ENCODE measurements at regions of chr3 and their contacts with region 1.

Region 1: GRCh38 chr3:49387721-49388120 is 24.1 kb downstream of the RHOA start:
- DNase-seq: peak; percentile 83
- ATAC-seq: peak; percentile 95
- H3K4me3 ChIP-seq: no peak overlapping the region
- H3K27ac ChIP-seq: peak overlapping the region; percentile 39
- H3K4me1 ChIP-seq: peaks cover 10% of the 10 kb centered on the region; the same call in 1 of the 2 replicates
- H3K27me3 ChIP-seq: no peaks in the 10 kb centered on the region
- CTCF ChIP-seq: no peak

Region 2: DNA sequence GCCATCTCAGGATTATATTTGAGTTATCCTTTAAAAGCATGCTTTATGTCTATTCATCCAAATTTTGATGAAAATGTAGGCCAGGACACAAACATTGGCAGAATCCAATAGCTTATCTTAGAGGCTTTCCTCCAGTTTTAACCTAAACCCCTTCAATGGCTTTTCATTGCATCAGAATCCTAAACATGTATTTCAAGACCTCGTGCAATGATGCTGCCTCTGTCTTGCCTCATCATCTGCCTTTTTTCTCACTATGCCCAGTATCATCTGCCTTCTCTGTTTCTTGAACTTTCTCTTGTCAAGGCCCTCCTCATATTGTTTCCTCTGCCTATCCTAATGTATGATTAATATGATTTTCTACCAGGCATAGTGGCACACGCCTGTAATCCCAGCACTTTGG is 1295.5 kb before region 1 on chr3:
- CTCF ChIA-PET with region 1: no interaction called
- POLR2A ChIA-PET with region 1: no interaction called
- intact Hi-C with region 1: no loop called
- DNase-seq: no peak
- ATAC-seq: no peak
- H3K4me3 ChIP-seq: no peak overlapping the region
- H3K27ac ChIP-seq: no peak overlapping the region
- H3K4me1 ChIP-seq: peaks cover 11% of the 10 kb centered on the region
- H3K27me3 ChIP-seq: no peaks in the 10 kb centered on the region
- CTCF ChIP-seq: no peak

Region 3: DNA sequence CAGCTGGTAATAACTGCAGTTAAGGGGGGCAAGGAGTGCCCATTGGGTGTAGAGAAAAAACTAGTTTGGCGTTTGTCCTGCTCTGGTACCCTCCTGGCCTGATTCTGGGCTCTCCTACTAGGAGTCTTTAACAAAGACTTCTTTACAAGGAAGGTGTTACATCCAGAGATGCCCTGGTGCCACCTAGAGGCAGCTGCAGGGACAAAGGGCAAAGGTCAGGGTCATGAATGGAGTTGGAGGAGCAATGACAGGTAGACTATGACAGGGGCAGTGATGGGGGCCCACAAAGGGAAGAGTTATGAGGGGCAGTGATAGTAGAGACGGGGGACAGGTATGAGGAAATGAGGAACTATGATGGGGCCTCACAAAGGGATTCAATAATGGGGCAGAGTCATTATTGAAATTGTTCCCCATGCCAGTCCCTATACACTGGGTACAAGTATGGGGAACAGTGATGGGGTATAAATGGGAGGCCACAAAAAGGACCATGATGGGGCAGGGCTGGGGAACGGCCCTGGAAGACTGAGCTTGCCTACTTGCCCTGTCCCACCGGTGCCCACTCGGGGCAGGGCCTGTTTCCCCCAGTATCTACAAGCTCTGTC is 229.5 kb before region 1 on chr3:
- CTCF ChIA-PET with region 1: no interaction called
- POLR2A ChIA-PET with region 1: no interaction called
- intact Hi-C with region 1: no loop called
- DNase-seq: peak; percentile 48
- ATAC-seq: peak; percentile 44
- H3K4me3 ChIP-seq: no peak overlapping the region
- H3K27ac ChIP-seq: no peak overlapping the region
- H3K4me1 ChIP-seq: no peaks in the 10 kb centered on the region
- H3K27me3 ChIP-seq: no peaks in the 10 kb centered on the region
- CTCF ChIP-seq: peak; percentile 64

Region 4: DNA sequence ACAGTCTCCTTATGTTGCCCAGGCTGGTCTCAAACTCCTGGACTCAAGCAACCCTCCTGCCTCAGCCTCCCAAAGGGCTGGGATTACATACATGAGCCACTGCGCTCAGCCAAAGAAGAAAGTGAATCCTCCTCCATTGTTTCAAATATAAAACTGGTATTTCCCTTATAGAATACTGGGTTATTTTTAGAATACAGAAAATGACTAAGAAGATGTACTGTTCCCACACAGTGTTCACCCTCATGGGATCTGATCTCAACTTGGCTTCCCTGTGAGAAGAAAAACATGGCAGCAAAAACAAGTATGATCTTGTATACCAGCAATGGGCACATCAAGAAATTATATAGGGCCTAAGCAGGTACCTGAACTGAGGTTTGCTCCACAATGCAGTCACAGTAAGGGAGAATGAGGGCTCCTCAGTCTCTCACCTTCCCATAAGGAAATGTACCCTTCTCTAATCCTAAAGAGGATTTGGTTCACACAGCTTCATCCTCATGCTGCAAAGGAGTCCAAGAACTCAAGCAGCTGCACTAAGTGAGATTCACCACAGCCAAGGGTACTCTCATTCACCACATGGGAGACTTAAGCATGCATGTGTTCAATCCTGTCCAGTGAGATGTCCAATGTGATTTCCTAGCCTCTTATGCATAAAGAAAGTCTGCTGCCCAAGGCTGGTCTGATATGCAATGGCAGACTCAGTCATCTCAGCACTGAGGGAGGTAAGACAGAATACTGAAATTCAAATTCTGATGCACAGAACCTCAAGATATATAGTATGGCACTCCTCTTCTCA is 73.6 kb before region 1 on chr3:
- CTCF ChIA-PET with region 1: no interaction called
- POLR2A ChIA-PET with region 1: no interaction called
- intact Hi-C with region 1: no loop called
- DNase-seq: no peak
- ATAC-seq: no peak
- H3K4me3 ChIP-seq: no peak overlapping the region
- H3K27ac ChIP-seq: no peak overlapping the region
- H3K4me1 ChIP-seq: no peaks in the 10 kb centered on the region
- H3K27me3 ChIP-seq: no peaks in the 10 kb centered on the region
- CTCF ChIP-seq: no peak

Region 5: GRCh38 chr3:49428697-49429100 is 41.0 kb after region 1 on chr3:
- CTCF ChIA-PET with region 1: no interaction called
- POLR2A ChIA-PET with region 1: no interaction called
- intact Hi-C with region 1: loop called (anchors 1 kb)
- DNase-seq: no peak
- ATAC-seq: peak; percentile 3; the same call in 1 of the 2 replicates
- H3K4me3 ChIP-seq: peak overlapping the region; percentile 72
- H3K27ac ChIP-seq: no peak overlapping the region
- H3K4me1 ChIP-seq: peaks cover 5% of the 10 kb centered on the region; the same call in 1 of the 2 replicates
- H3K27me3 ChIP-seq: no peaks in the 10 kb centered on the region
- CTCF ChIP-seq: no peak

Region 6: GRCh38 chr3:49747792-49748480 is 360.2 kb after region 1 on chr3:
- CTCF ChIA-PET with region 1: no interaction called
- POLR2A ChIA-PET with region 1: no interaction called
- intact Hi-C with region 1: no loop called
- DNase-seq: peak; percentile 17
- ATAC-seq: 0 out of 2 replicates have a peak, but pooled peaks have one; percentile 15
- H3K4me3 ChIP-seq: no peak overlapping the region
- H3K27ac ChIP-seq: no peak overlapping the region
- H3K4me1 ChIP-seq: peaks cover 4% of the 10 kb centered on the region
- H3K27me3 ChIP-seq: no peaks in the 10 kb centered on the region
- CTCF ChIP-seq: no peak